PC-9 (cell line): ENCODE measurements at regions of chr14 and their contacts with region 1.

Region 1: DNA sequence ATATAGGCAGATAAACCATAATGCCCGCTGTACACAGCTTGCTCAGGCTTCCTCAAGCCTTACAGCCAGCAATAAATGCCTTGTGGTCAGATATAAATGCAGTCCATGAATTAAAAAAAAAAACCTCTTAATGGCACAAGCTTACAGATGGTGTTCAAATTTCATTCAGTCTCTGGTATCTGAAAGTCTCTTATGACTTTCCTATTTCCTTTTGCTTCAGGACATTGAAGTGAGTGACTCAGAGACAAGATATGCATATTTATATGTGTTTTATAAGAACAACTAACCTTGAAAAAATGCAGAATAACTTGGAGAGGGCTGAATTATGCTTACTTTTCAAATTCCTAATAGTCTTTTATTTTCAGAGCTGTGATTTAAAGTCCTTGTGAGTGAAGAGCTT is 426.9 kb upstream of the MIS18BP1 start:
- DNase-seq: peak; percentile 9 to 93
- H3K4me3 ChIP-seq: no peak overlapping the region
- H3K27ac ChIP-seq: peak overlapping the region; percentile 54
- H3K4me1 ChIP-seq: peaks cover 14% of the 10 kb centered on the region
- H3K27me3 ChIP-seq: no peaks in the 10 kb centered on the region
- CTCF ChIP-seq: no peak

Region 2: DNA sequence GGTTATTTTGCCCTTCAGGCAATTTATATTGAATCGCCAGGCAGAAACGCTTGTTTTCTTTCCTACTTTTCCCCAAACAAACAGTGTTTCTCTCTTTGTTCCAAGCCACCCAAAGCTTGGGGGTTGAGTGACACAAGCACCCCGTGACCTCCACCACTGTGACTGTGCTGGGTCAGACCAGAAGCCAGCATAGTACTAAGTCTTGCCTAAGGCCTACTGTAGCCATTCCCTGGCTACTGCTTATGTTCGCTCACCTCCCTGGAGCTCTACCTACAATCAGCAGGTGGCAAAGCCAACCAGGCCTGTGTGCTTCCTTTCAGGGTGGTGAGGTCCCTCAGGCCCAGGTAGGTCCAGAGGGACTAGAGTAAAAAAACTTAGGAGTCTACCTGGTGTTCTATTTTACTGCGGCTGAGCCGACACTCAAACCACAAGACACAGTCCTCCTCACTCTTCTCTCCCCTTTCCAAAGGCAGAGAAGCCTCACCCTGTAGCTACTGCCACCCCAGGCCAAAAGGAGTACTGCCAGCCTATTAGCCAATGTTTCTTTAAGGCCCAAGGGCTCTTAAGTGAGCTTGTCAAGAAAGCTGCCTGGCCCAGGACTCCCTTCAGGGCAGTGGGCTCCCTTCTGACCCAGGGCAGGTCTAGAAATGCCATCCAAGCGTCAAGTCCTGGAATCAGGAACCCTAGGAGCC is 15.0 kb before region 1 on chr14:
- CTCF ChIA-PET with region 1: no interaction called
- POLR2A ChIA-PET with region 1: interaction called, 16 read pairs
- intact Hi-C with region 1: no loop called
- DNase-seq: peak in 1 of 2 experiments; percentile 3
- H3K4me3 ChIP-seq: no peak overlapping the region
- H3K27ac ChIP-seq: no peak overlapping the region
- H3K4me1 ChIP-seq: no peaks in the 10 kb centered on the region
- H3K27me3 ChIP-seq: no peaks in the 10 kb centered on the region
- CTCF ChIP-seq: peak; percentile 53